ENCODE measurements at regions of chr4 and their contacts with region 1.

Region 1: DNA sequence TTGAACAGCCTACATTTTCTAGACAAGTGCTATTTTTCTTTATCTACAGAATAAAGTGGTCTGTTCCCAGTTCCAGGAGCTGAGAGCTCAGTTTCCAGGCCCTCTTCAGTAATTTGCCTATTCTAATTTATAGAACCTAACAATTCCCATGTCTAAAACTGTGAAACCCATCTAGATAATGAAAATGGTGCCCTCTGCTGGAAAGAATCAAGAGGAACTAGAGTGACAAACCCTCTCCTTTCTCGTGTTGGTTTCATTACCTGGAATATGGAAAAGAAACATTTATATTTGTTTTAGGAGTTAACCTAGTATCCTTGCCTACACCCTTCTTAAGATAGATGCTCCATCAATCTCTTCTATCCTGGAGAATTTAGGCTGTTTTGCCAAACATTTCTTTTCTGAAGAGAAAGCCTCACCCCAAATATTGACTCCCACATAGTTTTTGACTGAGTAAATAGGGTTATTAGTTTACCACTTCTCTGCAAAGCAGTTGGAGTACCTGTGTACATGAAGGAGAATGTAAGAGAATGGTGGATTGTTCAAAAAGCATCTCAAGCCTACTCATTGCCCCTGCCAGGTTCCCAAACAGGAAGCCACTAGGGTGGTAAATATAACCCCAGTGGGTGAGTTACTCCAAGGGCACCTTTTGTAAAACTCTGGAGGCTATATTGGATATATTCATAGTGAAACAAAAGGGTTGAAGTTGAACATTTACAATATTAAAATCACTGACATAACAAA is 121.6 kb downstream of the RASL11B start:
- DNase-seq: peak; percentile 64
- H3K4me3 ChIP-seq: no peak overlapping the region
- H3K27ac ChIP-seq: no peak overlapping the region
- H3K4me1 ChIP-seq: no peaks in the 10 kb centered on the region
- H3K27me3 ChIP-seq: no peaks in the 10 kb centered on the region
- CTCF ChIP-seq: peak; percentile 38 to 44
- POLR2A ChIP-seq: no peak

Region 2: DNA sequence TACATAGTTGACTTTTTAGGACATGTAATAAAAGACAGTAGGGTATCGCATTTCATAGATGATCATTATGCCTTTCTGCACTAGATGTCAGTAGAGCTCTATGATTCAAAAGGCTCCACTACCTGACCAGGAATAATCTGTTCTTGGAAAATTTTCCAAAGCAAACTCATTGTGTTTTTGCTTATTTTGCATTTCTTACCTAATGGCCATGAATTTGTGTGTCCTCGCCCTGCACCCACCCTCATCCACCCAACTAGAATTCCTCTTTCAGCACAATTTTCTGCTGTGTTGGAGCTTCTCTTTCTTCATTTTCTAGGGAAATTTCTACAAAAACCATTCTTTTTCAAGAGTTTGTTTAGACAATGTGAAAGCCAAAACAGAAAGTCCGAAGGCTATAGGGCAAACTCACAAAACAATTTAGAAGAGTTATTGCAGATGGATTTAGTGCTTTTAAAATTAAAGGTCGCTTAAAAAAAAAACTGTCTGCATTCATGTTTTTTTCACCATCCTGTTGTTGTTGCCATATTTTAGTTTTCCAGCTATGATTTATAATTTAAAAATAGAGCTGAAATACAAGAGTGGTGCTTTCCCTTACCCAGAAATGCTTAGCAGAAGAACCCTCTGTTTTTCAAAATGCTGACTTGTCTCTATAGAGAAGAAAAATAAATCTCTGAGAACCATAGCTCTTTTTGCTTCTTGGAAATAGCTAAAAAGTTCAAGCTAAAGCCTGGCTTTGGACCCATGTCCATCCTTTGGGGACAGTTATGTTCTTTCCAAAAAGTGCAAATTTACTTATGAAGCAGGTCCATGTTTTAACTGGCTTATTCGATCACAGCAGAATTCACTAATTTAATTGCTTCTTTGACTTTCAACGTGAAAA is 748.9 kb before region 1 on chr4:
- CTCF ChIA-PET with region 1: no interaction called
- POLR2A ChIA-PET with region 1: no interaction called
- dilution Hi-C with region 1: no loop called
- intact Hi-C with region 1: loop called (anchors 2 kb)
- DNase-seq: peak; percentile 25
- H3K4me3 ChIP-seq: no peak overlapping the region
- H3K27ac ChIP-seq: no peak overlapping the region
- H3K4me1 ChIP-seq: no peaks in the 10 kb centered on the region
- H3K27me3 ChIP-seq: no peaks in the 10 kb centered on the region
- CTCF ChIP-seq: no peak
- POLR2A ChIP-seq: no peak

Region 3: DNA sequence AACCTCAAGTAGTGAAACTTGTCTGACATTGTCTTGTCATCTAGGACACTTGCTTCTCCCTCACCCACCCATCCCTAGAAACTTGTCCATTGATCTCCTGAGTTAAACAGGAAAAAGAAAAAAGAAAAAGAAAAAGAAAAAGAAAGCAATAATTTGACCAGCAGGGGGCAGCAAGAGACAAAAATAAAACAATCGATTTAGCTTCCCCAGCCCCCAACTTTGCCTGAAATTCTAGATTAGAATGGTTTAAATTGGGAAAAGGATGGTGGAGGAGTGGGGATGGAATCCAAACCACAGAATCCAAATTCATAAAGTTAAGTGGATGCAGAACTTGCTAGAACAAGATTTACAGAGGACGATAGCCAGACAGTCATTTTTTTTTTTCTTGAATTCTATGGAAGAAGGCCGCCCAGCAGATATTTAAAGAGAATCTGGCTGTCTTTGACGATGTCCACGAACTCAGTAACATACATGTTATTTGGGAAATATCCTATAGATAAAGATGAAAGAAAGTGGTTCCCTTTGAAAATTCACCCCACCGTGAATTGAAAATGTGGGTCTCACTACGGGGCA is 607.5 kb before region 1 on chr4:
- CTCF ChIA-PET with region 1: interaction called, 64 read pairs
- POLR2A ChIA-PET with region 1: no interaction called
- dilution Hi-C with region 1: no loop called
- intact Hi-C with region 1: loop called (anchors 1 kb)
- DNase-seq: peak; percentile 51
- H3K4me3 ChIP-seq: no peak overlapping the region
- H3K27ac ChIP-seq: no peak overlapping the region
- H3K4me1 ChIP-seq: no peaks in the 10 kb centered on the region
- H3K27me3 ChIP-seq: peaks cover 0 to 3% of the 10 kb centered on the region in 2 experiments
- CTCF ChIP-seq: peak; percentile 33
- POLR2A ChIP-seq: no peak

Region 4: DNA sequence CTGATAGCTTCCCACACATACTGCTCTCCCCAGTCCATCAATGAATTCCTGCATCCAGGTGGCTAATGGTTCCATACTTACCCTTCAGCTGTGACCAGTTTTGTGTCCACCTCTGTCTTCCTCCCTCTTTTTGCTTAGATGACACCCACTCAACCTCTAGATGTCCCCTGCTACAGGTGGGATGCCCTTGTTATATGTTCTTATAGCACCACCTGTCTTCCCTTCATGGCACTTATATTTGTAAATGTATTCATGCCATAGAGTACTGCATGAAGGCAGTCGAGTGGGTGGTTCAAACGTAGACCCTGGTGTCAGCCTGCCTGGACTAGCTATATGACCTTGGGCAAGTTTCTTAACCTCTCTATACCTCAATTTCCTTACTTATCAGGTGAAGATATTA is 318.1 kb before region 1 on chr4:
- CTCF ChIA-PET with region 1: interaction called, 6 read pairs
- POLR2A ChIA-PET with region 1: no interaction called
- dilution Hi-C with region 1: no loop called
- intact Hi-C with region 1: loop called (anchors 2 kb)
- DNase-seq: peak; percentile 47
- H3K4me3 ChIP-seq: no peak overlapping the region
- H3K27ac ChIP-seq: no peak overlapping the region
- H3K4me1 ChIP-seq: peaks cover 4% of the 10 kb centered on the region
- H3K27me3 ChIP-seq: peaks cover 6% of the 10 kb centered on the region in 2 experiments
- CTCF ChIP-seq: peak in 1 of 2 donors; percentile 9
- POLR2A ChIP-seq: no peak

Region 5: DNA sequence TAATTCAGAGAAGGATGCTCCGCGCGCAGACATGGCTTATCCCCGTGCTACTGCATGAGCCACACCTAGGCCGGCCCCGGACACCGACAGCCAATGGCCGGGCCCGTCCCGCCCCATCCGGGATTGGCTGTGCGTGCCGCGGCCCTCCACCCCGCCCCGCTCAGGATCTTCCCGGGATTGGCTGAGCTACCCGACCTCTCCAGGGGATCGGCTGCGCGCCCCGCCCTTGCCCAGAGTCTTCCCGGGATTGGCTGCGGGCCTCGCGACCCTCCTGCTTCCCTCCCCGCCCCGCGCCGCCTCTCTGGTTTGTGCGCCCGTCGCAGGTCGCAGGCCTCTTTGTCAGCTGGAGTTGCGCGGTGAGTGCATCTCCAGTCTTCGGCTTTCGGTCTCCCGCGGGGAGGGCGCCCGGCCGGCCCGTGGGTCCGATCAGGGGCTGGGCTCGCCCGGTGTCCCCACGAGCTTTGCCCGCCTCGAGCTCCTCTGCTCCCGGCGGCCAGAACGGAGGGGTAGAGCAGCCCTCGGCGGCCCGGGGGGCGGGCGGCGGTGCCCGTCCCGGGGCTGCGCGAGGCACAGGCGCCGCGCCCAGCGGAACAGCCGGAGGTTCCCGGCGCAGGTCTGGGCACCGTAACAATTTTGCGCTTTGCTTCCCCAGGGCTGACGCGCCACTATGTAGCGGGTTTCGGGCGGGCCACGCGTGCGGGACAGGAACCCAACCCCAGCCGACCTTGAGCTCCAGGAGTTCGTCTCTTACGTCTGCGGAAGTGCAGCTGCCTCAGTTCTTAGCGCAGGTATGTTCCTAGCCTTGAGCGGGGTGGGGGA is 271.4 kb before region 1 on chr4:
- CTCF ChIA-PET with region 1: interaction called, 3 read pairs
- POLR2A ChIA-PET with region 1: no interaction called
- dilution Hi-C with region 1: no loop called
- intact Hi-C with region 1: loop called (anchors 2 kb)
- DNase-seq: peak; percentile 97
- H3K4me3 ChIP-seq: peak overlapping the region; percentile 61 to 86 (median 76)
- H3K27ac ChIP-seq: peak overlapping the region; percentile 73
- H3K4me1 ChIP-seq: peaks cover 30% of the 10 kb centered on the region
- H3K27me3 ChIP-seq: peaks cover 0 to 5% of the 10 kb centered on the region in 2 experiments
- CTCF ChIP-seq: no peak
- POLR2A ChIP-seq: peak; percentile 97

Region 6: GRCh38 chr4:52911684-52912294 is 71.9 kb before region 1 on chr4:
- CTCF ChIA-PET with region 1: interaction called, 27 read pairs
- POLR2A ChIA-PET with region 1: no interaction called
- dilution Hi-C with region 1: no loop called
- intact Hi-C with region 1: loop called (anchors 2 kb)
- DNase-seq: peak; percentile 76
- H3K4me3 ChIP-seq: no peak overlapping the region
- H3K27ac ChIP-seq: no peak overlapping the region
- H3K4me1 ChIP-seq: no peaks in the 10 kb centered on the region
- H3K27me3 ChIP-seq: no peaks in the 10 kb centered on the region
- CTCF ChIP-seq: peak; percentile 85 to 89
- POLR2A ChIP-seq: no peak

Region 7: DNA sequence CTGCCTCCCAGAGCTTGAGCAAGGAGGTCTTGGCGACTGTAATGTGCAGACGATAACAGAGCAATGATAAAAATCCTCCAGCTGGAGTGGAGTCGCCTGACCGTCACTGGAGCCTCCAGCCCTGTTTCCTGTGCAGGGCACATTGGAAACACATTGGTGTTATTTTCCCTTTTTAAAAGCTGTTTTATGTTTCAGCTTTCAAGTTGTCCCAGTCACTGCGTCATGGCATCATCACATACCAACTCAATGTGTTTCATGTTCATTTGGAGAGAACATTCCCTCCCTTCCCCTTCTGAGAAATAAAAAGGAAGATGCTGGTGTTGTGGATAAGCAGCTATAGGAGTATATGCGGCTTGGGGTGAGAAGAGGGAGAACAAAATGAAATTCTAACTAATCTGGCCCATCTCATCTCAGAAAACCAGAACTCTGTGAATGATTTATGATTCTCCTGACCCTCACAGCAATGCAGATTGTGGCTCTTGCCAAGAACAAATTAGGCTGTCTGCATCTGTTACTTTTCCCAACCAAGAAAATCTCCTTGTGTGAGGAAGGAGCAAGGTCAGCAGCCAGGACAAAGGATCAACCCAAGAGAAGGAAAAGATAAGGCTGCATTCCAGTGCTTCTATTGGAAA is 12.6 kb after region 1 on chr4:
- CTCF ChIA-PET with region 1: no interaction called
- POLR2A ChIA-PET with region 1: no interaction called
- dilution Hi-C with region 1: no loop called
- intact Hi-C with region 1: no loop called
- DNase-seq: peak; percentile 89
- H3K4me3 ChIP-seq: no peak overlapping the region
- H3K27ac ChIP-seq: no peak overlapping the region
- H3K4me1 ChIP-seq: peaks cover 11% of the 10 kb centered on the region
- H3K27me3 ChIP-seq: no peaks in the 10 kb centered on the region
- CTCF ChIP-seq: no peak
- POLR2A ChIP-seq: no peak

Region 8: DNA sequence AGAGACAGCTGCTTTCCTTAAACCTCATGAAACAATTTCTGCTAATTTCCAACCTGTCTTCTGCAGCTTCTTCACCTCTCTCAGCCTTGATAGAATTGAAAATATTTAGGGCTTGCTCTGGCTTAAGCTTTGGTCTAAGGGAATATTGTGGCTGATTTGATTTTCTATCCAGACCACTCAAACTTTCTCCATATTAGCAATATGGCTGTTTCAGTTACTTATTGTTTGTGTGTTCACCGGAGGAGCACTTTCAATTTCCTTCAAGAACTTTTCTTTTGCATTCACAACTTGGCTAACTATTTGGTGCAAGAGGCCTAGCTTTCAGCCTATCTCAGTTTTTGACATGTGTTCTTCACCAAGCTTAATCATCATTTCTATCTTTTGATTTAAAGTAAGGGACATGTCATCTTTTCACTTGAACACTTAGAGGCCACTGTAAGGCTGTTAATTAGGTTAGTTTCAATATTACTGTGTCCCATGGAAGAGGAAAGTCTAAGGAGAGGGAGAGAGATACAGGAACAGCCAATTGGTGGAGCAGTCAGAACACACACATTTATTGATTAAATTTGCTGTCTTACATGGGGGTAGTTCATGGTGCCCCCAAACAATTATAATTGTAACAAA is 91.5 kb after region 1 on chr4:
- CTCF ChIA-PET with region 1: no interaction called
- POLR2A ChIA-PET with region 1: no interaction called
- dilution Hi-C with region 1: no loop called
- intact Hi-C with region 1: no loop called
- DNase-seq: no peak
- H3K4me3 ChIP-seq: no peak overlapping the region
- H3K27ac ChIP-seq: no peak overlapping the region
- H3K4me1 ChIP-seq: no peaks in the 10 kb centered on the region
- H3K27me3 ChIP-seq: no peaks in the 10 kb centered on the region
- CTCF ChIP-seq: no peak
- POLR2A ChIP-seq: no peak

Measured in endothelial cell of umbilical vein (primary cell).